Aorta (tissue), 5 donors: ENCODE measurements at regions of chr1 and their contacts with region 1.

Region 1: DNA sequence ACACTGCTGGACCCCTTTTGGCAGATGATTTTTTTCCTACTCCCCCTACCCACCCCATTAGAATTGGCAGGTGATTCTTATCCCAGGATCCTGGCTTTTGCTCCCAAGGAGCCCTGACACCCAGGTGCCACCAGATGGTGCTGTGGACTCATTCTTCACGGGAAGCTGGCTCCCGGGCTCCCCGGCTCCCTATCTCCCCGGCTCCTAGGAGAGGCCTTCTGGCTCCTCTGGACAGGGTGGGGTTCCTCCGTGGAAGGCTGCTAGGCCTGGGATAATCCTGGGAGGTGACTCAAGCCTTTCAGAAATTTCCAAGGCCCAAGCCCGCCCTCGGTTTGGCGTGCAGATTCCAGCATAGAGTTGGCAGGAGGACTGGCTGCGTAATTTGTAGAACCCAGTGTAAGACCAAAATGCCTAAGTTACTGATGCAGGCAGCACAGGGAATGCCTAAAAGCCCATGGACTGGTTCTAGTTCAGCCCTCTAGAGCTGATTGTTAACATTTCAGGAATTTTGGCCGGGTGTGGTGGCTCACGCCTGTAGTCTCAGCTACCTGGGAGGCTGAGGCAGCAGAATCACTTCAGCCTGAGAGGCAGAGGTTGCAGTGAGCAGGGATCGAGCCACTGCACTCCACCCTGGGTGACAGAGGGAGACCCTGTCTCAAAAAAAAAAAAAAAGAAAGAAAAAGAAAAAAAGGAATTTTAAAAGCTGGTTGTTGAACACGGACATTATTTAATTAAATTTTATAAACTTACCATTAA is 6.8 kb upstream of the BSDC1 start:
- DNase-seq: peak; percentile 94 to 95
- ATAC-seq: peak; percentile 97
- H3K4me3 ChIP-seq: no peak overlapping the region
- H3K27ac ChIP-seq: peak overlapping the region in 1 of 2 donors; percentile 75
- H3K4me1 ChIP-seq: no peaks in the 10 kb centered on the region
- H3K27me3 ChIP-seq: no peaks in the 10 kb centered on the region

Region 2: GRCh38 chr1:32413507-32414185 is 12.6 kb after region 1 on chr1:
- intact Hi-C with region 1: loop called in 1 of 2 experiments (anchors 1 kb)
- DNase-seq: peak in 1 of 2 donors; percentile 55
- ATAC-seq: peak; percentile 84
- H3K4me3 ChIP-seq: no peak overlapping the region
- H3K27ac ChIP-seq: no peak overlapping the region
- H3K4me1 ChIP-seq: no peaks in the 10 kb centered on the region
- H3K27me3 ChIP-seq: no peaks in the 10 kb centered on the region